CD8-positive, alpha-beta memory T cell (primary cell): ENCODE measurements at regions of chr11 and their contacts with region 1.

Region 1: GRCh38 chr11:60985991-60986915 is 14.8 kb downstream of the CD6 start:
- DNase-seq: peak; percentile 81 to 97 (median 95)
- H3K4me3 ChIP-seq: peak overlapping the region; percentile 23
- H3K4me3 Mint-ChIP-seq: peak overlapping the region; percentile 56 to 82 (median 71)
- H3K27ac ChIP-seq: peak overlapping the region; percentile 55
- H3K27ac Mint-ChIP-seq: peak overlapping the region; percentile 84 to 99 (median 96)
- H3K4me1 ChIP-seq: peaks cover 88% of the 10 kb centered on the region
- H3K4me1 Mint-ChIP-seq: peaks cover 79 to 97% (median 92%) of the 10 kb centered on the region in 3 donors
- H3K27me3 ChIP-seq: no peaks in the 10 kb centered on the region
- H3K27me3 Mint-ChIP-seq: no peaks in the 10 kb centered on the region

Region 2: DNA sequence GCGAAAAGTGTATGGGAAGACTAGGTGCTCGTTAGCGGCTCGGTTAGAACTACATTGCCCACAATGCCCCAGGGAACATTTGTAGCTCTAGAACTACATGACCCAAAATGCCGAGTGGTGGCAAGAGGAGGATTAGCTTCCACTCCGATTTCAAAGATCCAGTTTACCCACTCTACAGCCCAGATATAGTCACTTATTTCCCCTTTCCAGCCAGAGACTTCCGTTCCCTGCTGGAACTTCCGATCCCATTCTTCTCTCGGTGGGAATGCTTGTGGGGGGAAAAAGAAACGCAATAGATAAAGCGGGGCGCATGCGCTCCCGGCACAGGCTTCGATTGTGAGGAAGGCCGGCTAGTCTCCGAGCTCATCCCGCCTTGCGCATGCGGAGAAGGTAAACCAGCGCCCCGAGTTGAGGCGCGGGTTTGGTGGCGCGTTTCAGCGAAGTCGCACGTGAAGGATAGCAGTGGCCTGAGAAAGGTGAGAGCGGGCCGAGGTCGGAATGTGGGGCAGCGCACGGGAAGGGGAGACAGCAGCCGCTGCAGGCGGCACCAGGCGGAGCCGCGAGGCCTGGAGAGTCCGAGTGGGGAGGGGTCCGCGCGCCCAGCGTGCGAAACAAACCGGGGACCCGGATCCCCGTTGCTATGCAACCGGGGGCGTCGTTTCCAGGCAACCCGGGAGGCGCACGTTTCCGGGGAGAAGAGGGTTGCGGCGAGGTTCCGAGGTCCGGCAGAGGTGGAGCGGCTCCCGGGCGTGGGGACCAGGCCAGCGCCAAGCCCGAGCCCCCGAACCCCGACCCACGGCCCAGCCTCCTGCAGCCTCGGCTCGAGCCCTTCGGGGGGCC is 72.2 kb before region 1 on chr11 and contains the start of gene TMEM109:
- CTCF ChIA-PET with region 1: interaction called, 4 read pairs
- POLR2A ChIA-PET with region 1: interaction called, 15 read pairs
- DNase-seq: peak; percentile 82 to 92 (median 88)
- H3K4me3 ChIP-seq: peak within 1 kb of the TSS; percentile 91
- H3K4me3 Mint-ChIP-seq: peak within 1 kb of the TSS; percentile 93 to 99 (median 97)
- H3K27ac ChIP-seq: peak within 1 kb of the TSS; percentile 82
- H3K27ac Mint-ChIP-seq: peak within 1 kb of the TSS; percentile 95 to 99 (median 98)
- H3K4me1 ChIP-seq: peaks cover 47% of the 10 kb centered on the region
- H3K4me1 Mint-ChIP-seq: peaks cover 59 to 81% (median 63%) of the 10 kb centered on the region in 3 donors
- H3K27me3 ChIP-seq: no peaks in the 10 kb centered on the region
- H3K27me3 Mint-ChIP-seq: no peaks in the 10 kb centered on the region
- total RNA-seq, gene TMEM109: 144 to 147 TPM

Region 3: GRCh38 chr11:60932605-60933356 is 53.5 kb before region 1 on chr11:
- CTCF ChIA-PET with region 1: no interaction called
- POLR2A ChIA-PET with region 1: no interaction called
- DNase-seq: no peak
- H3K4me3 ChIP-seq: no peak overlapping the region
- H3K4me3 Mint-ChIP-seq: no peak overlapping the region
- H3K27ac ChIP-seq: no peak overlapping the region
- H3K27ac Mint-ChIP-seq: no peak overlapping the region
- H3K4me1 ChIP-seq: no peaks in the 10 kb centered on the region
- H3K4me1 Mint-ChIP-seq: no peaks in the 10 kb centered on the region
- H3K27me3 ChIP-seq: peaks cover 6% of the 10 kb centered on the region
- H3K27me3 Mint-ChIP-seq: peaks cover 7 to 14% of the 10 kb centered on the region in 2 donors

Region 4: DNA sequence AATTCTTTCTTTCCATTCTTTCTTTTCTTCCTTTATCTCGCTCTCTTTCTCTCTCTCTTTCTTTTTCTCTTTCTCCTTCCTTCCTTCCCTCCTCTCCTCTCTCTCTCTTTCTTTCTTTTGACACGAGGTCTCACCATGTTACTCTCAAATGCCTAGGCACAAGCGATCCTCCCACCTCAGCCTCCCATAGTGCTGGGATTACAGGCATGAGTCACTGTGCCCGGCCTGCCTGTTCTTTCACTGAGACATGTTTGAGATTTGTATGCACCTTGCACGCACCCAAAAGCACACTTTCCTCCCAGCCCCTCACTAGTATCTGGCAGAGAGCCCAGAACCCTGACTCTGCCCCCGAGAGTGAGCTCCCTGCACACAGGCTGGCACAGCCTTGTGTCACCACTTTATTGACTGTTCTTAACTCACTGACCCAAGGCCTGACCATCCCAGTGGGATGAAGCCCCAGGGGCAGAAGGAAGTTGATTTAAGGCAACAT is 42.1 kb after region 1 on chr11:
- CTCF ChIA-PET with region 1: interaction called, 4 read pairs
- POLR2A ChIA-PET with region 1: interaction called, 10 read pairs
- DNase-seq: peak in 3 of 5 donors; percentile 23 to 70 (median 56)
- H3K4me3 ChIP-seq: peak overlapping the region; percentile 40
- H3K4me3 Mint-ChIP-seq: peak overlapping the region; percentile 62 to 84 (median 77)
- H3K27ac ChIP-seq: no peak overlapping the region
- H3K27ac Mint-ChIP-seq: peak overlapping the region in 7 of 8 donors; percentile 61 to 96 (median 95)
- H3K4me1 ChIP-seq: peaks cover 57% of the 10 kb centered on the region
- H3K4me1 Mint-ChIP-seq: peaks cover 47 to 69% (median 60%) of the 10 kb centered on the region in 3 donors
- H3K27me3 ChIP-seq: no peaks in the 10 kb centered on the region
- H3K27me3 Mint-ChIP-seq: peaks cover 0 to 4% of the 10 kb centered on the region in 2 donors

Region 5: DNA sequence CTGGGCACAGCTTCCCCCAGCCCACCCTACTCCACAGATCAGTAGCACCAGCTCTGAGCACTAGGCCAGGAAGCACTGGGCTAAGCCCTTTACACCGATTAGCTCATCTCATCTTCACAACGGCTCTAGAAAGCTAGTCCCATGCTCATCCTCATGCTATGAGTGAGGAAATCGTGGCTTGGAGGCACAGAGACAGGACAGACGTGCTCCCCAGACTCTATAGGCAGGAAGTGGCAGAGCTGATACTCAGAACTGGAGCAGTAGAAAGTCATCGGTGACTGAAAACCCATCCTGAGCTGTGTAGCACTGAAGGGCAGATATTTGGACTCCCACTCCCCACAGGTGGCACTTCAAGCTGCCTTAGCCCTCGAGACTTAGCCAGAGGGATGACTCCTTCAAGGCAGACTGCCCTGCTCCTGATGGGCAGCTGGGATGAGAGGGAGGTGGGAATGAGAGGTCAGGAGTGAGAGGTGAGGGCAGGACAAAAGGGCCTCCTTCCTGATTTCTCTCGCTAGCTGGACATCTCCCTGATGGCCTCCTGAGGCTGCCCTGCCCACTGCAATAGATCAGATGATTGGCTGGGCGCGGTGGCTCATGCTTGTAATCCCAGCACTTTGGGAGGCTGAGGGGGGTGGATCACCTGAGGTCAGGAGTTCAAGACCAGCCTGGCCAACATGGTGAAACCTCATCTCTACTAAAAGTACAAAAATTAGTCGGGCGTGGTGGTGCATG is 125.7 kb after region 1 on chr11:
- CTCF ChIA-PET with region 1: no interaction called
- POLR2A ChIA-PET with region 1: interaction called, 11 read pairs
- DNase-seq: peak in 4 of 5 donors; percentile 32 to 70 (median 63)
- H3K4me3 ChIP-seq: peak overlapping the region; percentile 23
- H3K4me3 Mint-ChIP-seq: peak overlapping the region; percentile 38 to 84 (median 73)
- H3K27ac ChIP-seq: peak overlapping the region; percentile 44
- H3K27ac Mint-ChIP-seq: peak overlapping the region in 7 of 8 donors; percentile 73 to 97 (median 92)
- H3K4me1 ChIP-seq: peaks cover 95% of the 10 kb centered on the region
- H3K4me1 Mint-ChIP-seq: peaks cover 68 to 99% (median 97%) of the 10 kb centered on the region in 3 donors
- H3K27me3 ChIP-seq: no peaks in the 10 kb centered on the region
- H3K27me3 Mint-ChIP-seq: no peaks in the 10 kb centered on the region